CD4-positive, alpha-beta T cell (primary cell): ENCODE measurements at regions of chr12 and their contacts with region 1.

Region 1: DNA sequence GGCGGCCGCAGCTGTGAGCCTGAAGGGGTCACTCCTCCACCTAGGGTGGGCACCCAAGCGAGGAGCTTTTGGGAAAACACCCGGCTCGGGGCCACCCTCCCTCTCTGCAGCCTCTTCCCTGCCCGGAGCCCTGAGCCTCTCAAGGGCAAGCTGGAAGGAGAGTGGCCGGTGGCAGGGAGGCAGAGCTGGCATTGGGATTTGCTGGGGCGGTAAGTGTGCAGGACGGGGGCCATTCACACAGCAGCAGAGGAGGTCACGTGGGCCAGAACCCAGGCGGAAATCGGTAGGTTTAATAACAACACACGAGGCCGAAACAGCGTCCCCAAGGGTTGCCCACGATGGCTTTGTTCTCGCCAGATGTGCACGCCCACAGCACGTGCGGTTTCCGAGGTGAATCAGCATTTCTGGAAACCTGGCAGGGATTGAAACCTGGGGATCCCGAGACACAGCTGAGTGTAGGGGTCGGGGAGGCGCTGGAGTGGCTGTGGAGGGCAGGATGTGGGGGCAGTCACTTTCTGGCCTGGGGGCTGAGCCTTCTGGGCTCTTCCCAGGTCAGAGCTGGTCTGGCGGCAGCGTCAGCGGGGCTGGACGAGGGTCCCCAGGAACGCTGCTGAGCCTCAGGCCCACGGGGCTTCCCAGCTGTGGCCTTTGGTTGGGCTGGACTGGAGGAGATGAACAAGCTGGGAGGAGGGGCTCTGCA is 23.5 kb downstream of the NOC4L start:
- DNase-seq: no peak
- ATAC-seq: no peak
- H3K4me3 ChIP-seq: no peak overlapping the region
- H3K4me3 Mint-ChIP-seq: no peak overlapping the region
- H3K27ac ChIP-seq: no peak overlapping the region
- H3K27ac Mint-ChIP-seq: no peak overlapping the region
- H3K4me1 ChIP-seq: peaks cover 30% of the 10 kb centered on the region
- H3K4me1 Mint-ChIP-seq: peaks cover 6% of the 10 kb centered on the region
- H3K27me3 ChIP-seq: peaks cover 0 to 5% of the 10 kb centered on the region in 2 experiments
- H3K27me3 Mint-ChIP-seq: no peaks in the 10 kb centered on the region
- CTCF ChIP-seq: no peak

Region 2: GRCh38 chr12:132342251-132343227 is 174.8 kb after region 1 on chr12:
- CTCF ChIA-PET with region 1: no interaction called
- POLR2A ChIA-PET with region 1: no interaction called
- intact Hi-C with region 1: loop called in 1 of 2 experiments (anchors 5 kb)
- DNase-seq: peak in 1 of 14 experiments; percentile 27
- ATAC-seq: no peak
- H3K4me3 ChIP-seq: no peak overlapping the region
- H3K4me3 Mint-ChIP-seq: no peak overlapping the region
- H3K27ac ChIP-seq: no peak overlapping the region
- H3K27ac Mint-ChIP-seq: no peak overlapping the region
- H3K4me1 ChIP-seq: no peaks in the 10 kb centered on the region
- H3K4me1 Mint-ChIP-seq: peaks cover 8% of the 10 kb centered on the region
- H3K27me3 ChIP-seq: no peaks in the 10 kb centered on the region
- H3K27me3 Mint-ChIP-seq: peaks cover 28% of the 10 kb centered on the region
- CTCF ChIP-seq: peak; percentile 27